Aorta (tissue), 5 donors: ENCODE measurements at regions of chr10 and their contacts with region 1.

Region 1: DNA sequence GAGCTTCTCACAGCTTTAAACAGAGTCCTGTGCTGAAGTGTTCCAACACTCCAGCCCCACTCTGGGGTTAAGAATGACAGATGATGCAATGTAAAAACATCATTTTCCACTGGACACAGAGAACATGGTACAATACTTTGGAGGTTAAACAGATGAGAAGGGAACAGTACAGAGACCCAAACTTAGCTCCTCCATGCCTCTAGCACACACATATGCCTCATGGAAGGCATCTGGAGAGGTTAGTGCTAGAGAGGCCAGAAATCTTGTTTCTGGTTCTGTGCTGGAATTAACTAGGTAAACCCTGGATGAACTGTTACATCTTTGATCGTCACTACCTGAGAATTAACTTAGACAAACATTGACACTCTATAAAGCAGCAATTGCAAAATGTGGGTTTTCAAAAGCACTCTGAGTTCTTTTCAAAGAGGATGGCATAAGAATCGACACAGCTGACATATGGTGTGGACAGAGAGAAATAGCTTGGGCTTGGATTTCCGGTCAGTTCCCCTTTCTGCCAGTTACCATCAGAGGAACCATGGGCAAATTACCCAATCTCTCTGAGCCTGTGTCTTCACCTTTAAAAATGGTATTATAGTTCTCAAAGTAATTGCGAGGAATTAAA is 81.9 kb downstream of the KCNMA1 start:
- DNase-seq: no peak
- ATAC-seq: peak; percentile 71
- H3K4me3 ChIP-seq: no peak overlapping the region
- H3K27ac ChIP-seq: peak overlapping the region; percentile 72 to 85
- H3K4me1 ChIP-seq: peaks cover 1 to 5% of the 10 kb centered on the region in 2 donors
- H3K27me3 ChIP-seq: no peaks in the 10 kb centered on the region

Region 2: DNA sequence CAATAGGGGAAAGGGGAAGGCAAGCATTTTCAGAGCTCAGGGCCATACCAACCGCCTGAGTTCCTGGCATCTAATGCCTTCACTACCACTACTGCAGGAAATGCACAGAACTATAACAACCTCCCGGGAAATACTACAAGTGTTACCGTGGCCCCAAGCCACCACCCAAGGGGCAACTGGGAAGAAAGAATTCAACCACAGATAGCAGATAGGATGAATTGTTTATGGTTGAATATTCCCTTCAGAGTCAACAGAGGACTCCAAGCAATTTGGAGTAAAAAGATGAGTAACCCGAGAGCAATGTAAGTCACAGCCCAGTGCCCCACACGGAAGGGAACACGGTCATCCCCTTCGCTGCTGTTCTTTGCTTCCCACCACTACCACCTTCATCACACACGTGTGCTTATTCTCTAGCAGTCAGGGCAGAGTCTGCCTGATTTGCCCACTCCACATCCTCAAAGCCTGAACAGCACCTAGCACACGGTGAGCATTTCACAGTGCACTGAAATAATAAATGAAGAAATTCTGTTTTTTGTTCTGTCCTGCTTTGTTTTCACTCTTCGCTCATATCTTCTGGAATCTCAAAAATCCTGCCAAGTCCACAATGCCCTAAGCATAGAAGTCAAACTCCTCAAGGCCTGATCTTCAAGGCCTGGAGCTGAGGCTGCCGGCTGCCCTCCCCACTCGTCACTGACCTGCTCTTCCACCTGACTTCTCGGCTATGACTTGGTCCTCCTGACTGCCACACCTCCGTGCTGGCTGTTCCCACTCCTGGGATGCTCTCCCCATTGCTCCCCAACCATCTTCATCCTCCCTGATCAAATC is 139.2 kb before region 1 on chr10:
- intact Hi-C with region 1: loop called in 1 of 2 experiments (anchors 5 kb)
- DNase-seq: peak in 1 of 2 donors; percentile 76
- ATAC-seq: no peak
- H3K4me3 ChIP-seq: no peak overlapping the region
- H3K27ac ChIP-seq: peak overlapping the region; percentile 96 to 100
- H3K4me1 ChIP-seq: peaks cover 11 to 18% of the 10 kb centered on the region in 2 donors
- H3K27me3 ChIP-seq: no peaks in the 10 kb centered on the region

Region 3: DNA sequence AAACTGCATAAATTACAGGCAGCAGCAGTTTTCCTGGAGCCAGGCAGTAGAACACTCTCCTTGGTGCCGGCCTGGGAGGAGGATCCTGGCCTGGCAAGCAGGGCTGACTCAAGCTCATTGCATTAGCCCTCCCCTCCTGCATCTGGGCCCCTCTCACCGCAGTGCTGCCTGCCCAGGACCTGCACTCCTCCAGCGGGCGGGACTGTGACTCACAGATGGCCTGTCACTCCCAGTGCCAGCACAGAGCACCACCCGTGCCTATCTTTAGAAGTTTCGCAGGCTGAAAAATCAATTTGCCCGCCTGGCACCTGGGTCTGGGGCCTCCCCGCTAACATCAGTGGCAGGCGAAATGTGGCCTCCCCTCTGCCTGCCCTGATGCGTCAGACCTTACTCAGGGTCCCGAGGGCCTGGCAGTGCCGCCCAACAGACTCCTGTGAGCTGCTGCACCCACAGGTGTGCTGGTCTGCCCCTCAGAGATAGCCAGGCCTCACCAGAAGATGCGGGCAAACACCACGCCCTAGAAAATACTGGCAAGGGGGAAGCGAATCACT is 41.8 kb before region 1 on chr10:
- intact Hi-C with region 1: no loop called
- DNase-seq: peak; percentile 90 to 94
- ATAC-seq: peak; percentile 78
- H3K4me3 ChIP-seq: no peak overlapping the region
- H3K27ac ChIP-seq: peak overlapping the region; percentile 6 to 72
- H3K4me1 ChIP-seq: peaks cover 6% of the 10 kb centered on the region in 2 donors
- H3K27me3 ChIP-seq: no peaks in the 10 kb centered on the region